ENCODE measurements at regions of chr11 and their contacts with region 1.

Region 1: GRCh38 chr11:18243783-18244362 is 4.6 kb downstream of the SAA2 start:
- DNase-seq: peak; percentile 54
- ATAC-seq: peak; percentile 38
- H3K4me3 ChIP-seq: no peak overlapping the region
- H3K27ac ChIP-seq: peak overlapping the region; percentile 12; the same call in 1 of the 2 replicates
- H3K4me1 ChIP-seq: peaks cover 20% of the 10 kb centered on the region
- H3K27me3 ChIP-seq: no peaks in the 10 kb centered on the region
- CTCF ChIP-seq: peak; percentile 85 to 94 (median 89)
- EP300 ChIP-seq: no peak
- POLR2A ChIP-seq: no peak
- RAD21 ChIP-seq: peak; percentile 93

Region 2: DNA sequence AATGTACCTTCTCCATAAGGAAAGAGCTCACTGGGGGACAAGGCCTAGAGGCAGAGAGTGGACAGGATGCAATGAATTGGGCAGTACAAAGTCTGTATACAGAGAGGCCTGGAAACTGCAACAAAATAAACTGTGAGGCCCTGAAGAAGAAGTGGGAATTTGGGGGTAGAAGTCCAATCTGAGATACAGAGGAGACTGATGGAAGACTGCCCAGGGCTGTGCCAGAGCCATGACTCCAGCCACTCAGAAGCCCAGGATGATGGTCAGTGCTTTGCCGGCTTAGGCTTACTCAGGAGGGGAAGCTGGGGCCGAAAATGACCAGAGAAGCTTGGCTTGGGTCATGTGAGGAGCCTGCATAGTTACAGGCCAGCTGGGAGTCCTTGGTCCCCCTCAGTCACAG is 13.0 kb before region 1 on chr11:
- CTCF ChIA-PET with region 1: interaction called, 12 read pairs
- POLR2A ChIA-PET with region 1: no interaction called
- RAD21 ChIA-PET with region 1: interaction called, 8 read pairs
- SMC1A ChIA-PET with region 1: interaction called, 4 read pairs
- in situ Hi-C with region 1: no loop called
- intact Hi-C with region 1: no loop called
- DNase-seq: no peak
- ATAC-seq: no peak
- H3K4me3 ChIP-seq: no peak overlapping the region
- H3K27ac ChIP-seq: no peak overlapping the region
- H3K4me1 ChIP-seq: peaks cover 8% of the 10 kb centered on the region
- H3K27me3 ChIP-seq: no peaks in the 10 kb centered on the region
- CTCF ChIP-seq: no peak
- EP300 ChIP-seq: no peak
- POLR2A ChIP-seq: no peak
- RAD21 ChIP-seq: no peak

Region 3: GRCh38 chr11:18299721-18300120 is 55.8 kb after region 1 on chr11:
- CTCF ChIA-PET with region 1: interaction called, 11 read pairs
- POLR2A ChIA-PET with region 1: no interaction called
- RAD21 ChIA-PET with region 1: interaction called, 9 read pairs
- SMC1A ChIA-PET with region 1: interaction called, 8 read pairs
- in situ Hi-C with region 1: no loop called
- intact Hi-C with region 1: no loop called
- DNase-seq: no peak
- ATAC-seq: no peak
- H3K4me3 ChIP-seq: no peak overlapping the region
- H3K27ac ChIP-seq: no peak overlapping the region
- H3K4me1 ChIP-seq: peaks cover 5% of the 10 kb centered on the region
- H3K27me3 ChIP-seq: no peaks in the 10 kb centered on the region
- CTCF ChIP-seq: no peak
- EP300 ChIP-seq: no peak
- POLR2A ChIP-seq: no peak
- RAD21 ChIP-seq: no peak

Region 4: GRCh38 chr11:18374956-18375355 is 131.1 kb after region 1 on chr11:
- CTCF ChIA-PET with region 1: interaction called, 13 read pairs
- POLR2A ChIA-PET with region 1: no interaction called
- RAD21 ChIA-PET with region 1: interaction called, 3 read pairs
- SMC1A ChIA-PET with region 1: interaction called, 4 read pairs
- in situ Hi-C with region 1: no loop called
- intact Hi-C with region 1: no loop called
- DNase-seq: no peak
- ATAC-seq: no peak
- H3K4me3 ChIP-seq: no peak overlapping the region
- H3K27ac ChIP-seq: no peak overlapping the region
- H3K4me1 ChIP-seq: no peaks in the 10 kb centered on the region
- H3K27me3 ChIP-seq: no peaks in the 10 kb centered on the region
- CTCF ChIP-seq: no peak
- EP300 ChIP-seq: no peak
- POLR2A ChIP-seq: no peak
- RAD21 ChIP-seq: no peak

Region 5: GRCh38 chr11:18540207-18541009 is 296.5 kb after region 1 on chr11:
- CTCF ChIA-PET with region 1: interaction called, 29 read pairs
- POLR2A ChIA-PET with region 1: no interaction called
- RAD21 ChIA-PET with region 1: interaction called, 7 read pairs
- SMC1A ChIA-PET with region 1: interaction called, 11 read pairs
- in situ Hi-C with region 1: no loop called
- intact Hi-C with region 1: no loop called
- DNase-seq: no peak
- ATAC-seq: peak; percentile 84
- H3K4me3 ChIP-seq: no peak overlapping the region
- H3K27ac ChIP-seq: no peak overlapping the region
- H3K4me1 ChIP-seq: no peaks in the 10 kb centered on the region
- H3K27me3 ChIP-seq: no peaks in the 10 kb centered on the region
- CTCF ChIP-seq: peak; percentile 46 to 69 (median 56)
- EP300 ChIP-seq: no peak
- POLR2A ChIP-seq: no peak
- RAD21 ChIP-seq: peak; percentile 66

Region 6: GRCh38 chr11:18731949-18732821 is 488.3 kb after region 1 on chr11:
- CTCF ChIA-PET with region 1: interaction called, 15 read pairs
- POLR2A ChIA-PET with region 1: no interaction called
- RAD21 ChIA-PET with region 1: interaction called, 3 read pairs
- SMC1A ChIA-PET with region 1: interaction called, 6 read pairs
- in situ Hi-C with region 1: no loop called
- intact Hi-C with region 1: loop called (anchors 10 kb)
- DNase-seq: peak; percentile 24
- ATAC-seq: peak; percentile 84
- H3K4me3 ChIP-seq: no peak overlapping the region
- H3K27ac ChIP-seq: no peak overlapping the region
- H3K4me1 ChIP-seq: peaks cover 8% of the 10 kb centered on the region
- H3K27me3 ChIP-seq: no peaks in the 10 kb centered on the region
- CTCF ChIP-seq: peak; percentile 89 to 99 (median 99)
- EP300 ChIP-seq: no peak
- POLR2A ChIP-seq: no peak
- RAD21 ChIP-seq: peak; percentile 89